OCI-LY7 (cell line): ENCODE measurements at regions of chr2 and their contacts with region 1.

Region 1: DNA sequence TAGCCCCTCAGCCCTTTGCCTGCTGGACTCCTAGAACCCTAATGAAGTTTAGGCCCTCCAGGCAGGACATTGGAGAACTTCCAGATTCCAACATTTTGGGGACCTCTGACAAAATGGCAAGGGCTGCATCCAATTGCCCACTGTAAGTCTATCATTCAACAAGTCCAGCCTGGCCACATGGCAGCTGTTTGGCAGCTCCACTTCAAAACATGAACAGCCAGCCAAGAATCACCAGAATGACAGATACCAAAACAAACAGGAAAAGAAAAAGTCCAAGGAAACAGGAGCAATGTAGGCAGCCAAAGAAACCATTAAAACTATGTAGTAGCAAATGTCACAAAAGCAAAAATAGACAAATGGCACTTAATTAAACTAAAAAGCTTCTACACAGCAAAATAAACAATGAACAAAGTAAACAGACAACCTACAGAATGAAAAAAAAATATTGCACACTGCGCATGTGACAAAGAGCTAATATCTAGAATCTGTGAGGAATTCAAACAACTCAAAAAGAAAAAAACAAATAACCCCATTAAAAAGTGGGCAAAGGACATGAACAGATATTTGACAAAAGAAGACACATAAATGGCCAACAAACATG is 25.4 kb downstream of the SLC4A5 start:
- DNase-seq: no peak
- H3K4me3 ChIP-seq: no peak overlapping the region
- H3K27ac ChIP-seq: no peak overlapping the region
- H3K4me1 ChIP-seq: no peaks in the 10 kb centered on the region
- CTCF ChIP-seq: no peak

Region 2: DNA sequence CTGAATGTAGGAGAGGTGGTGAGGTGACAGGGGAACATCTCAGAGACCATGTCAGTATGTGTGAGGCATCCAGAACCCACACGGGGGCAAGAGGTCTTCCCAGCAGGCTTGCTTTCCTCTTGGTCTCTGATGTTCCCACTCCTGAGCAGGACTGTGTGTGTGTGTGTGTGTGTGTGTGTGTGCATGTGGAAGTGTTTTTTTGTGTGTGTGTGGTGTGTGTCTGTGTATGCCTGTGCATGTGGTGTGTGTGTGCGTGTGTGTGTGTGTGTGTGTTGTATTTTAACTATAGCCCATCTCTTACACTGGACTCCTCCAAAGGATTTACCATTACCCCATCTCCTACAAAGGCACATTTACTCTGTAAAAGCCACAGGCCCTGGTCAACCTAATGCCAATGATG is 14.9 kb before region 1 on chr2:
- CTCF ChIA-PET with region 1: no interaction called
- POLR2A ChIA-PET with region 1: no interaction called
- intact Hi-C with region 1: no loop called
- DNase-seq: no peak
- H3K4me3 ChIP-seq: no peak overlapping the region
- H3K27ac ChIP-seq: no peak overlapping the region
- H3K4me1 ChIP-seq: peaks cover under 1% of the 10 kb centered on the region
- CTCF ChIP-seq: no peak

Region 3: DNA sequence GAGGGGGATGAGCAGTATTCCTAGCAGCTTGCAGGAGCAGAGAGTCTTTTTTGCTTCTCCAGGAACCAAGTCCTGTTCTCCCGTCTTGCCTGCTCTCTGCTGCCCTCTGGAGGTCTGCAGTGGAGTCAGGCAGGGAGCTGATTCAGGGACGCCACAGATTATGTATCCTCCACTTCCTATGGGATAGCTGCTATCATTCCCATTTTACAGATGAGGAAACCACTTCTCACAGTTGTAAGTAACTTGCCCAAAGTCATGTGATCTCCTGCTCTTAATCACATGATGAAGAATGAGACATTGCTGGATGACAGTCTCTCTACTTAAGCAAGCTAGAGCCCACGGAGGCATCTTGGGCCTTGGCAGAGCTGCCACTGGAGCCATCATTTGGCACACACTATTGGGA is 17.1 kb after region 1 on chr2:
- CTCF ChIA-PET with region 1: interaction called, 15 read pairs
- POLR2A ChIA-PET with region 1: interaction called, 3 read pairs
- intact Hi-C with region 1: no loop called
- DNase-seq: peak; percentile 72
- H3K4me3 ChIP-seq: no peak overlapping the region
- H3K27ac ChIP-seq: no peak overlapping the region
- H3K4me1 ChIP-seq: no peaks in the 10 kb centered on the region
- CTCF ChIP-seq: peak; percentile 95